ENCODE measurements at regions of chr7 and their contacts with region 1.

Region 1: GRCh38 chr7:138459413-138460175 is 465 bp upstream of the TRIM24 start:
- DNase-seq: peak; percentile 95 to 99 (median 98)
- ATAC-seq: peak; percentile 83
- H3K4me3 ChIP-seq: peak overlapping the region; percentile 52
- H3K4me3 Mint-ChIP-seq: peak overlapping the region; percentile 72
- H3K27ac ChIP-seq: peak overlapping the region in 1 of 2 donors; percentile 40
- H3K27ac Mint-ChIP-seq: peak overlapping the region; percentile 38
- H3K4me1 ChIP-seq: peaks cover 18% of the 10 kb centered on the region
- H3K4me1 Mint-ChIP-seq: peaks cover 23% of the 10 kb centered on the region
- H3K27me3 ChIP-seq: no peaks in the 10 kb centered on the region
- H3K27me3 Mint-ChIP-seq: no peaks in the 10 kb centered on the region
- CTCF ChIP-seq: peak; percentile 39

Region 2: GRCh38 chr7:138161600-138162081 is 298.0 kb before region 1 on chr7:
- CTCF ChIA-PET with region 1: no interaction called
- POLR2A ChIA-PET with region 1: no interaction called
- intact Hi-C with region 1: loop called in 1 of 2 experiments (anchors 2 kb)
- DNase-seq: peak; percentile 51 to 94 (median 64)
- ATAC-seq: peak; percentile 100
- H3K4me3 ChIP-seq: no peak overlapping the region
- H3K4me3 Mint-ChIP-seq: no peak overlapping the region
- H3K27ac ChIP-seq: no peak overlapping the region
- H3K27ac Mint-ChIP-seq: no peak overlapping the region
- H3K4me1 ChIP-seq: no peaks in the 10 kb centered on the region
- H3K4me1 Mint-ChIP-seq: no peaks in the 10 kb centered on the region
- H3K27me3 ChIP-seq: no peaks in the 10 kb centered on the region
- H3K27me3 Mint-ChIP-seq: peaks cover 3% of the 10 kb centered on the region
- CTCF ChIP-seq: peak; percentile 70

Region 3: GRCh38 chr7:138738551-138739335 is 279.1 kb after region 1 on chr7:
- CTCF ChIA-PET with region 1: interaction called, 6 read pairs
- POLR2A ChIA-PET with region 1: no interaction called
- intact Hi-C with region 1: loop called in 1 of 2 experiments (anchors 2 kb)
- DNase-seq: peak; percentile 74 to 95 (median 84)
- ATAC-seq: peak; percentile 97
- H3K4me3 ChIP-seq: no peak overlapping the region
- H3K4me3 Mint-ChIP-seq: no peak overlapping the region
- H3K27ac ChIP-seq: no peak overlapping the region
- H3K27ac Mint-ChIP-seq: no peak overlapping the region
- H3K4me1 ChIP-seq: no peaks in the 10 kb centered on the region
- H3K4me1 Mint-ChIP-seq: peaks cover 5% of the 10 kb centered on the region
- H3K27me3 ChIP-seq: no peaks in the 10 kb centered on the region
- H3K27me3 Mint-ChIP-seq: no peaks in the 10 kb centered on the region
- CTCF ChIP-seq: peak; percentile 93

Region 4: GRCh38 chr7:139109188-139109982 is 649.8 kb after region 1 on chr7 and contains the start of gene ZC3HAV1:
- CTCF ChIA-PET with region 1: no interaction called
- POLR2A ChIA-PET with region 1: no interaction called
- intact Hi-C with region 1: loop called in 1 of 2 experiments (anchors 10 kb)
- DNase-seq: peak; percentile 80 to 97 (median 88)
- ATAC-seq: peak; percentile 86
- H3K4me3 ChIP-seq: peak within 1 kb of the TSS; percentile 97
- H3K4me3 Mint-ChIP-seq: peak within 1 kb of the TSS; percentile 99
- H3K27ac ChIP-seq: peak within 1 kb of the TSS; percentile 97 to 98
- H3K27ac Mint-ChIP-seq: peak within 1 kb of the TSS; percentile 95
- H3K4me1 ChIP-seq: peaks cover 35% of the 10 kb centered on the region
- H3K4me1 Mint-ChIP-seq: peaks cover 52% of the 10 kb centered on the region
- H3K27me3 ChIP-seq: no peaks in the 10 kb centered on the region
- H3K27me3 Mint-ChIP-seq: no peaks in the 10 kb centered on the region
- CTCF ChIP-seq: no peak
- total RNA-seq, gene ZC3HAV1: 169 to 178 TPM

Region 5: DNA sequence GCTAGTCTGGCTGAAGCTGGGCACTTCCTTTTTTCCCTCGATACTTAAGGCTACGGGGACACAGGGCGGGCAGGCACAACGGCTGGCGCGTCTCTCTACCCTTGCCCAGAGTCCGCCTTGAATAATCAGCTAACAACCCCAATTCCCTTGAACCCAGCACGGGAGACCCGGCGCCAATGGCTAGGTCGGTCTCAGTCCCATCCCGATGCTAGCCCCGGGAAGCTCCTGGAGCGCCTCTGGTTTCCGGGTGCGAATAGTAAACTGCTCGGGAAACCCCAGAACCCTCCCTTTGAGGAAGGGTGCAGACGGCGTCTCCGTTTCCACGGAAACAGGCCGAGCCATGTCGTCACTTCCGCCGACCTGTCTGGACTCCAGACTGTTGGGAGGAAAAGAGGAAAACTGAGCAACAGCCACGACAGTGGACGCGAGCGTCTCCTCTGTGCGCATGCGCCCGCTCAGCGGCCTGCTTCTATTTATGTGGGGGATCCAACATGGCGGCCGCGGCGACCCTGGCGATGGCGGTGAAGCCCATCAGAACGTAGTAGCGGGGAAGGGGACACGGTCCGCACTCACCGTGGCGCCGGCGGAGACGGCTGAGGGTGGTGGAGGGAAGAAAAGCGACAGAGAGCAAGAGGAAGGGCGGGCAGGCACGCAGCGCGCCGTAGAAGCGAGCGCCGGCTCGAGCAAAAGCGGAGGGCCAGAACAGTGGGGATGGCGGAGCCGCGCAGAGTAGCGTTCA is 771.3 kb after region 1 on chr7 and contains the start of gene UBN2:
- CTCF ChIA-PET with region 1: no interaction called
- POLR2A ChIA-PET with region 1: no interaction called
- intact Hi-C with region 1: loop called in 1 of 2 experiments (anchors 10 kb)
- DNase-seq: peak; percentile 70 to 96 (median 85)
- ATAC-seq: peak; percentile 66
- H3K4me3 ChIP-seq: peak within 1 kb of the TSS; percentile 97
- H3K4me3 Mint-ChIP-seq: peak within 1 kb of the TSS; percentile 97
- H3K27ac ChIP-seq: peak within 1 kb of the TSS; percentile 60 to 74
- H3K27ac Mint-ChIP-seq: peak within 1 kb of the TSS; percentile 89
- H3K4me1 ChIP-seq: peaks cover 11% of the 10 kb centered on the region
- H3K4me1 Mint-ChIP-seq: peaks cover 48% of the 10 kb centered on the region
- H3K27me3 ChIP-seq: no peaks in the 10 kb centered on the region
- H3K27me3 Mint-ChIP-seq: peaks cover 5% of the 10 kb centered on the region
- CTCF ChIP-seq: no peak
- total RNA-seq, gene UBN2: 9.6 to 13.3 TPM

Measured in CD4-positive, alpha-beta T cell (primary cell).